Activated CD4-positive, alpha-beta T cell treated with anti-CD3 and anti-CD28 coated beads, Interleukin-2, amount 10 ng/mL, durations not matched to agents 24 days and 14 days (primary cell): ENCODE measurements at regions of chr22 and their contacts with region 1.

Region 1: GRCh38 chr22:21791635-21792625 is 56.3 kb upstream of the YPEL1 start:
- DNase-seq: peak; percentile 63
- H3K4me3 Mint-ChIP-seq: peak overlapping the region; percentile 4
- H3K27ac Mint-ChIP-seq: peak overlapping the region; percentile 79
- H3K4me1 Mint-ChIP-seq: peaks cover 13% of the 10 kb centered on the region
- H3K27me3 Mint-ChIP-seq: no peaks in the 10 kb centered on the region

Region 2: DNA sequence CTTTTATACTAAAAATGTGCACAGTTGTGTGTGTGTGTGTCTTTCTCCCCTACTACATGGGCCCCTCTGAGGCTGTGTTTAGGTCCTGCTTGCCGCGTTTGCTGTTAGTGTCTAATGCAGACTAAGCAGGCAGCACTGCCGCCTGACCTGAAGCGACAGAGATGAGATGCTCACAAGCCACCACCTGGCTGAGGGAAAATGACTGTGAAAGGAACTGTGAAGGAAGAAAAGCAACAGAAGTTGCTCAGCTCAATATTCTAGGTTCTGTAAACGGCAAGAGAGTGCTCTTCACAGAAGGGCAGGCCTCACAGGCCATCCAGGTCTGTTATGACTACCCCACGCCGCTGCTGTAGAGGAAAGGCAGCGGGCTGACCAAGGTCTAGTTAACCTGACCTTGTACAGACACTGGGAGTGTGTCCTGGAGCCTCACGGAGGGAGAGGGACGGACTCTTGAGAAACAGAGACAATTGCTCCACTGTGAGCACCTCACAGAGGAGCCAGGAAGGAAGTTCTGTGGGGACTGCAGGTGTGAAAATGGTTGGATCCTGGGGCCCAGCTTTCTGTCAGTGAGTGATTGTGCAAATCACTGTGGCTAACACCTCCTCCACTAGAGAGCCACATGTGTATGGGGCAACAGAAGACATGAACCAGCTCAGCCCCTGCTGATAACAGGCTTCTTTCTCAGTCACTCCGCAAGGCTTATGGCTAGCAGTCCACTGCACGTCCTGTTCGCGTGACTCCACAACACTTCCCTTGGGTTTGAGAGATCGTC is 25.1 kb before region 1 on chr22:
- intact Hi-C with region 1: loop called (anchors 1 kb)
- DNase-seq: peak; percentile 85
- H3K4me3 Mint-ChIP-seq: peak overlapping the region; percentile 51
- H3K27ac Mint-ChIP-seq: peak overlapping the region; percentile 84
- H3K4me1 Mint-ChIP-seq: peaks cover 60% of the 10 kb centered on the region
- H3K27me3 Mint-ChIP-seq: no peaks in the 10 kb centered on the region

Region 3: DNA sequence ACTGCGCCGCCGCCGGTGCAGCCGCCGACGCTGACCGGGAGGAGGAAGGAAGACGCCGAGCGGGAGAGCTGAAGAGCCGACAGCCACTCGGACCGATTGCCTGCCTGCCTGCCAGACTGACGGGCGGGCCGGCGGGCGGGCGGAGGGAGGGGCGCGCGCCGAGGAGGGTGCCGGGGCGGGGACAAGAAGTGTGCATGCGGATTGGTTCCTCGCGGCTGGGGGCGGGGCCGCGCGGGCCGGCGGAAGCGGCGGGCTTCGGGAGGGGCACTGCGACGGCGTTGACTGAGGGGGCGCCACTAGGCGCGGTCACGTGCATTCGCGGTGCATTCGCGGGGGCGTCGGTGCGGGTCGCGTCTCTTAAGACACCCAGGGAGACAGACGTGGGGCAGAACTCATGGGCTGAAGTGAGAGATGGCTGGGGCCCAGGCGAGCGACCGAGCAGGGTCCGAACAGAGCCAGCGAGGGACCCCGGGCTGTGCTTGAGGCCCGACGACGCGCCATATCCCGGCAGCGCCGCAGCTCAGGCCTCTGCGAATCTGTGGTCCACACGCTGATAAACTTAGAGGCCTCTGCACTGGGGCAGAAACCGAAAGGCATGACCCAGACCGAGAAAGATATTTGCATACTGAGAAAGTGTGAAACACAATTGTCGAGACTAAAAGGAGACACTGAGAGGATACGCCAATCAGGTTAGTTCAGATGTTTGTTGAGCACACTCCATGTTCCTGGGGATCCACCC is 75.8 kb after region 1 on chr22 and contains the start of gene MAPK1:
- intact Hi-C with region 1: loop called (anchors 2 kb)
- DNase-seq: peak; percentile 98
- H3K4me3 Mint-ChIP-seq: peak within 1 kb of the TSS; percentile 92
- H3K27ac Mint-ChIP-seq: peak within 1 kb of the TSS; percentile 97
- H3K4me1 Mint-ChIP-seq: peaks cover 34% of the 10 kb centered on the region
- H3K27me3 Mint-ChIP-seq: peaks cover 19% of the 10 kb centered on the region
- total RNA-seq, gene MAPK1: 101 TPM in 2 replicates